ENCODE measurements at regions of chr18 and their contacts with region 1.

Region 1: DNA sequence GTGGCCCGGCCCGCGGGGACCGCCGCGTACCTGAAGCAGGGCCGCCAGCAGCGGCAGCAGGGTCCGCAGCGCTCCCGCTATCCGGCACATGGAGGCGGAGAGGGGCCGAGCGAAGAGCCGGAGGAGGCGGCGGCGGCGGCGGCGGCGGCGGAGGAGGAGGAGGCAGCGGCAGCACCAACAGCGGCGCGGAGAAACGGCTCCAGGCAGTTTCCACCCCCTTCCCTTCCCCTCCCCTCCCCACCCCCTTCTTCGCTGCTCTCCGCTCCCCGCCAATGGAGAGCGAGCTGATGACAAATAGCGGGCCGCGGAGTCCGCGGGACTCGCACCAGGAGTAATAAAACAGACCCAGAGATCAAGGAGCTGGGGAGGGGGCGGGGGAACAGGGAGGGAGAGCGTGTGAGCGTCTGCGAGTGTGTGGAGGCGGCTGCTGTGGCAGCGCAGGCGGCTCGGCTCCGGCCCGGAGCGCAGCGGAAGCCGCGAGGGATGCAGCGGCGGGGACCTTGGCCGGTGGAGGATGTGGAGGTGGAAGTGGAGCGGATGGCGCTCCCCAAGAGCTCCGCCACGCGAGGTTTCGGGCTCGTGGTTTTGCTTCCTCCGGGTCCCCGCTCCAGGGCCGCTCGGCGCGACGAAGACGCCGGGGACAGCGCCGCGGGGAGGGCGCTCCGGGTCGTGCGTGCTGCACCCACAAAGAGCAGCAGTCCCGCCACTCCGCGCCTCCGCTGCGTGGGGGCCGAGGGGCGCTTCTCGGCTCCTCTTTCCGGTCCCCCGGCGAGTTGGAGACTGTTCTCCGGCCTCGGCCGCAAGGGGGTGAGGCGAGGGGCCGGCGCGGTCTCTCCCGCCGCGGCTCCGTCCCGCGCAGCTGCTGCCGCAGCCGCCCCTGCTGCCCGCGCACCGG is at the start of gene CDH2:
- DNase-seq: peak; percentile 68 to 90 (median 89)
- ATAC-seq: peak; percentile 74 to 80
- H3K4me3 ChIP-seq: peak within 1 kb of the TSS; percentile 53
- H3K27ac ChIP-seq: peak within 1 kb of the TSS; percentile 76
- H3K4me1 ChIP-seq: no peaks in the 10 kb centered on the region
- H3K27me3 ChIP-seq: no peaks in the 10 kb centered on the region
- total RNA-seq, gene CDH2: 204 to 338 (median 262) TPM

Region 2: DNA sequence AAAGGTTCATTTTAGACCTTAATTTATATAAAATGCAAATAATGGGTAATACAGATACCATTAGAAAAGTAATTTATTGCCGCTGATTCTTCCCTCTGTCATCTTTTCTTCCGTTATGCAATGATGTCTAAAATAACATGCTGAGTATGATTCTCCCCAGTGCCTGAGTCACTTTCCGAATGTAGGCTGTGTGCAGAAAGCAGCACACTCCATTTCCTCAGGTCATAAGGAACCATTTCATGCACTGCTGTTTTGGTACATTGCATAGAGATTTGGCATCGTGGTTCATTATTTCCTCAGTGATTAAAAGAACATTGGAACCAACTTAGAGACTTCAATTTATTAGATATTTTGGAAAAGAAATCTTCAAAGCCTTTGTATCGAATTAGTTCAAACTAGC is 173.7 kb before region 1 on chr18:
- intact Hi-C with region 1: loop called in 1 of 4 experiments (anchors 10 kb)
- DNase-seq: no peak
- ATAC-seq: peak; percentile 46 to 65
- H3K4me3 ChIP-seq: no peak overlapping the region
- H3K27ac ChIP-seq: no peak overlapping the region
- H3K4me1 ChIP-seq: peaks cover 2% of the 10 kb centered on the region
- H3K27me3 ChIP-seq: no peaks in the 10 kb centered on the region

Region 3: DNA sequence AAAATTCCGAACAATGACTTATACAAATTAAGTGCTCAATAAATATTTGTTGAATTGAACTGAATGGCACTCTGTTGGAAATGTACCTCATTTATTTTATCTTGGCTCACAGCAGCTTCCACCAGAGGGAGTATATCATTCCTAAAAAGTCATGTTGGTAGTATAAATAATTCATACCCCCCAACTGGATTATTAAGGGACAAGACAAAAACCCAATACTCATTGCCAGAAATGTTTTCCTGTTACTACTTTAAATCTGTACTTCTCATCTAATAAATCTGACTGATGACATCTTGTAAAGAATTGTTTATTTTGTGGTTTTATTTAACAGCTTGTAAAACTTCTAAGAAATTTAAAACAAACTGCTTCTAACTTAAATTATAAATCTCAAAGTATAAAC is 164.1 kb before region 1 on chr18:
- intact Hi-C with region 1: loop called in 2 of 4 experiments (anchors 10 kb)
- DNase-seq: no peak
- ATAC-seq: no peak
- H3K4me3 ChIP-seq: no peak overlapping the region
- H3K27ac ChIP-seq: no peak overlapping the region
- H3K4me1 ChIP-seq: peaks cover 2% of the 10 kb centered on the region
- H3K27me3 ChIP-seq: no peaks in the 10 kb centered on the region

Region 4: DNA sequence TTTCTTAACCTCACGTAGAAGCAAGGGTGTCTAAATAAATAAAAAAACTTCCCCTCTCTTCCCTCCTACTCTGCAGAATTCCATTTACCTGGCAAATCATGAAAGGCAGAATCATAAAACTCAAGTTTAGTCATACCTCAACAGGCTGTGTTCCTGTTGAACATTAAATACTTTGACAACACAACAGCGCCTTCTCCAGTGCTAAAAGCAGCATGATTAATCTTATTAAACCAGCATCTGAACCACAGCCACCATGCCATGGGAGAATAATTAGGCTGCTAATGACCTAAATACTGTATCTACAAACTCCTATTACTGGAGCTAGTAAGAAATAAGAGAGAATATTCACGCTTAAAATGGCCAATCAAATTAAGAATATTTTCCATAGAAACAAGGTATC is 68.4 kb before region 1 on chr18:
- intact Hi-C with region 1: loop called in 2 of 4 experiments (anchors 5 kb)
- DNase-seq: no peak
- ATAC-seq: no peak
- H3K4me3 ChIP-seq: no peak overlapping the region
- H3K27ac ChIP-seq: no peak overlapping the region
- H3K4me1 ChIP-seq: peaks cover 8% of the 10 kb centered on the region
- H3K27me3 ChIP-seq: no peaks in the 10 kb centered on the region

Region 5: DNA sequence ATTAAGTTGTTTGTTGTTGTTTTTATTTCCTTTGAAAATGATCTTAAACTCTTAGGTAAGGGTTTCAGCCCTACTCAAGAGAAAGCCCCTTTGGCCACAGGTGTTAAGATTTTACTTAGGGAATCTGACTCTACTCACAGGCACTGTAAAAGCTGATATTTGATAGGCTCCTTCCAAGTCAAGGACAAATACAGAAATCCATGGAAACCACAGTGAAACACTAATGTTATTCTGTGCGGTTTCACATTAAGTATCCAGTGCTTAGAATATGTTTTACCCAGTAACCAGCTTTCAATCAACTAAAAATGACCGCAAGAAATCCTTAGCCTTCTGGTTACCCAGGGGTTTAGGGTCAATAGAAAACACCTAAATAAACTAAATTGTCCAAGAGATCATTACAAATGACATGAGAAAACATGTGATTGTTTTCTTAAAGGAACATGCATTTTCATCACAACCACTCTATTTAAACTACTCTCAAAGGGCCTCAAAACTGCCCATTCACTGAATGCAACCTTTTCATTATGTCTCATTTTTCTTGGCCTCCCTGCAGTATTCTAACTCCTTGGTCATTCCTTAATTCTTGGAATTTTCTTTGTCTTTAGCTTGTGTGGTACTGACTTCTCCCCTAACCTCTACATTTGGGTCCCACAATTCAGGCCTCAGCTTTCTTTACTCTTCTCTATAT is 56.2 kb before region 1 on chr18:
- intact Hi-C with region 1: no loop called
- DNase-seq: no peak
- ATAC-seq: no peak
- H3K4me3 ChIP-seq: no peak overlapping the region
- H3K27ac ChIP-seq: no peak overlapping the region
- H3K4me1 ChIP-seq: peaks cover 2% of the 10 kb centered on the region
- H3K27me3 ChIP-seq: no peaks in the 10 kb centered on the region

Region 6: DNA sequence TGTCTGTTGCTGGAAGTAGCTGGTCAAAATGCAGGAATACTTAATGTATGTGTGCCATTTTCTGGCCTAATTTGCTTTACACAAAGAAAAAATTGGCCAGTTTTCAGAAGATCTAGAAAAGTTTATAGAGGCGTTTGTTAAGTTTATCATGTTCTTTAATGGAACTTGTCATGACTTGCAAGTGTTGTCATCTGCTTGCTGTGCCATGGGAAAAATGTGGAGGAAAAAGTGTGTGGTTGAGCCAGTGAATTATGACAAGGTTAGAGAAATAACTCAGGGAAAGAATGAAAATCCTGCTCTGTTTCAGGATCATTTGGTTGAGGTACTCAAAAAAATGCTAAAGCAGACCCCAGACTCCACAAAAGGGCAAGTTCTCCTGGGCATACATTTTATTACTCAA is 301.4 kb after region 1 on chr18:
- intact Hi-C with region 1: no loop called
- DNase-seq: no peak
- ATAC-seq: no peak
- H3K4me3 ChIP-seq: no peak overlapping the region
- H3K27ac ChIP-seq: no peak overlapping the region
- H3K4me1 ChIP-seq: no peaks in the 10 kb centered on the region
- H3K27me3 ChIP-seq: no peaks in the 10 kb centered on the region

Measured in right cardiac atrium (tissue), 5 donors.